PC-9 (cell line): ENCODE measurements at regions of chr22 and their contacts with region 1.

Region 1: GRCh38 chr22:19962233-19962908 is 20.8 kb upstream of the TXNRD2 start:
- DNase-seq: peak; percentile 66 to 67
- H3K4me3 ChIP-seq: peak overlapping the region; percentile 57
- H3K27ac ChIP-seq: peak overlapping the region; percentile 68
- H3K4me1 ChIP-seq: peaks cover 15% of the 10 kb centered on the region
- H3K27me3 ChIP-seq: no peaks in the 10 kb centered on the region
- CTCF ChIP-seq: peak; percentile 77

Region 2: DNA sequence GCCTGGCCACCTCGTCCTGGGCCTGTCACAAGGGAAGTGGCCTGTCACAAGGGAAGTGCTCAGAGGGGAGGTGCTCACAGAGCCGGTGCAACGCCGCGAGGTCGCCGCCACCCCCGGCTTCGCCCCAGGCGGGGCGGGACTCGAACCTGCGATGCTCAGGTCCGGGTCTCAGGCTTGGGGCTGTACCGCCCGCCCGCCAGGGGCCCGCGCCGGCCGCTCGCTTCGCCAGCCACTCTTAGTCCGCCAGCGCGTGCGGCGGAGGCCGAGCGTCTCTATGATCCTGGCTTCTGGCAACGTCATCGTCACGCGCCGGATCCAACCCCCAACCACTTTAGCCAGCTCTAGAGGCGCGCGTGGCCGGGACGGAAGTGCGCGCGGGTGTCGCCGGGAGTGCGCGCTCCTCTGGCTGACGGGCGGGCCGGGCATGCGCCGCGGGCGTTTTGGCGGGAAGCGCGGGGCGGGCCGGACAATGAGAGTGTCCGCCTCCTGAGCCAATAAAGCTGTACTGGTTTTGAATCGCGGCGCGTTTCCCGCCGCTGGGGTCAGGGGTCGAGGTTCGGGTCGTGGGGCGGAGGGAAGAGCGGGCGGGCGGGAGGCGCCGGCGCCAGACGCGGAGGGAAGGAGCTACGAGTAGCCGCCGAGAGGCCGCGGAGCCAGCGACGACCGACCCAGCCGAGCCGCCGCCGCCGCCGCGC is 154.7 kb after region 1 on chr22 and contains the start of gene TRMT2A:
- CTCF ChIA-PET with region 1: no interaction called
- POLR2A ChIA-PET with region 1: no interaction called
- intact Hi-C with region 1: loop called (anchors 2 kb)
- DNase-seq: peak; percentile 80 to 95
- H3K4me3 ChIP-seq: peak within 1 kb of the TSS; percentile 75
- H3K27ac ChIP-seq: 0 out of 2 replicates have a peak within 1 kb of the TSS, but pooled peaks have one; percentile 28
- H3K4me1 ChIP-seq: peaks cover 9% of the 10 kb centered on the region; the same call in 1 of the 2 replicates
- H3K27me3 ChIP-seq: no peaks in the 10 kb centered on the region
- CTCF ChIP-seq: no peak
- total RNA-seq, gene TRMT2A: 31.5 and 32.7 TPM in 2 replicates

Region 3: DNA sequence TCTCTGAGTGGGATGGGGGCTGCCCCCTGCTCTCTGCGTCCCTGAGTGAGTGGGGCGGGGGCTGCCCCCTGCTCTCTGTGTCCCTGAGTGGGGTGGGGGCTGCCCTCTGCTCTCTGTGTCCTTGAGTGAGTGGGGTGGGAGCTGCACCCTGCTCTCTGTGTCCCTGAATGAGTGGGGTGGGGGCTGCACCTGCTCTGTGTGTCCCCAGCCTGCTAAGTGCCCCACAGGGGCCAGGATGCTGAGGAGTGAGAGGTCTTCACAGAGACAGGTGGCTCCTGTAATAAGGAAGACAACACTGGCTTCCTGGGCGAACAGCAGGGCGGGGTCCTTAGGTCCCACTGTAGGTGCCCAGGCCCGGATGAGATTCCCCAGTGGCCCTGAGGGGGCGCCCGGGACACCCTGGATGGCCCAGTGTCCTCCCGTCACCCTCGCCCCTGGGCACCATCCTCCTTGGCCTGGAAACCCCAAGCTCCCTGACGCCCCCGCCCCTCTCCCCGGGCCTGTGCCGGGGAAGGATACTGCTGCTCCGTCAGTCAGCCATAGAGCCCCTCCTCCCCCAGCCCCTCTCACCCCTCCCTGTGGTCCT is 192.3 kb after region 1 on chr22:
- CTCF ChIA-PET with region 1: no interaction called
- POLR2A ChIA-PET with region 1: no interaction called
- intact Hi-C with region 1: no loop called
- DNase-seq: no peak
- H3K4me3 ChIP-seq: no peak overlapping the region
- H3K27ac ChIP-seq: no peak overlapping the region
- H3K4me1 ChIP-seq: no peaks in the 10 kb centered on the region
- H3K27me3 ChIP-seq: peaks cover 11% of the 10 kb centered on the region; the same call in 1 of the 2 replicates
- CTCF ChIP-seq: no peak

Region 4: GRCh38 chr22:20279662-20280134 is 317.3 kb after region 1 on chr22:
- CTCF ChIA-PET with region 1: no interaction called
- POLR2A ChIA-PET with region 1: no interaction called
- intact Hi-C with region 1: loop called (anchors 10 kb)
- DNase-seq: peak in 1 of 2 experiments; percentile 41
- H3K4me3 ChIP-seq: no peak overlapping the region
- H3K27ac ChIP-seq: no peak overlapping the region
- H3K4me1 ChIP-seq: no peaks in the 10 kb centered on the region
- H3K27me3 ChIP-seq: no peaks in the 10 kb centered on the region; the same call in 1 of the 2 replicates
- CTCF ChIP-seq: no peak